HEK293T (cell line): ENCODE measurements at regions of chr1 and their contacts with region 1.

Region 1: GRCh38 chr1:23098463-23099170 is 70.0 kb downstream of the LUZP1 start:
- DNase-seq: peak; percentile 71

Region 2: GRCh38 chr1:23108918-23109533 is 10.4 kb after region 1 on chr1:
- CTCF ChIA-PET with region 1: interaction called, 13 read pairs
- POLR2A ChIA-PET with region 1: no interaction called
- DNase-seq: no peak

Region 3: DNA sequence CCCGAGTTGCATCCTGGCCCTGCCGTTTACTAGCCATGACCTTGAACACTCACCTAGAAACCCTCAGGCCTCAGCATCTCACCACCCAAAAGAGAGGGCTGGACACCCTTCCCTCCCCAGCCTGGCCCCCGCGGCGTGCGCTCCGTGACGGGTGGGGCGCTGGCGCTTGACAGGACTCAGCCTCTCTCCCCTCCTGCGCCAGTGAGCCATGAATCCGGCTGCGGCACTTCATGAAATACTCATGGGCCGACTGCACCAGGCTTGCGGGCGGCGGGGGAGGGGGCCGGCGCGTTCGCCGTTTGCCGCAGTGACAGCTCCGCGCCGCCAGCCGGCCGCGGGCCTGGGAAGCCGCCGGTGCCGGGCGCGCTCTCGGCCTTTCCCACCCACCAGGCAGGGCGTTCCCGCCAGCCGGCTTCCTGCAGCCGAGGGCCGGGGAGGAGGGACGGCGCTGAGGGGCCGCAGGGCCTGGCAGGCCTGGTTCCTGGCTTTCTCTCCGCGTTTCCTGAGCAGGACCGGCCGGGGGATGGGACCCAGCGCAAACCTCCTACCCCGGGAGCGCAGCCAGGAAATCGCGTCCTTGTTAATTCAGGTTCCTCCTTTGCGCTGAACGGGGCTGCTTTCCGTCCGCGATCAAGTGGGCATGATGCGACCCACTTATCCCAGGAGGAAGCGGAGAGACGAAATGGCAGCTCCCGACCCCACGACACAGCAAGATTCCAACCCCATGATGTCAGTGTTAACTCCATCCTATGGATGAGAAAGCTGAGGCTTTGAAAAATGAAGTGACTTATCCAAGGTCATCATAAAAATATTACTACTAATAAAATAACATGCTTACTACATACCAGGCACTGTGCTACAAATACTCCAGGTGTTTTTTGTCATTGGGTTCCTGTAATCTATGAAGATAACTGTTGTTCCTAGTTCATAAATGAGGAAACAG is 79.1 kb after region 1 on chr1:
- CTCF ChIA-PET with region 1: interaction called, 118 read pairs
- POLR2A ChIA-PET with region 1: interaction called, 5 read pairs
- DNase-seq: peak; percentile 74

Region 4: DNA sequence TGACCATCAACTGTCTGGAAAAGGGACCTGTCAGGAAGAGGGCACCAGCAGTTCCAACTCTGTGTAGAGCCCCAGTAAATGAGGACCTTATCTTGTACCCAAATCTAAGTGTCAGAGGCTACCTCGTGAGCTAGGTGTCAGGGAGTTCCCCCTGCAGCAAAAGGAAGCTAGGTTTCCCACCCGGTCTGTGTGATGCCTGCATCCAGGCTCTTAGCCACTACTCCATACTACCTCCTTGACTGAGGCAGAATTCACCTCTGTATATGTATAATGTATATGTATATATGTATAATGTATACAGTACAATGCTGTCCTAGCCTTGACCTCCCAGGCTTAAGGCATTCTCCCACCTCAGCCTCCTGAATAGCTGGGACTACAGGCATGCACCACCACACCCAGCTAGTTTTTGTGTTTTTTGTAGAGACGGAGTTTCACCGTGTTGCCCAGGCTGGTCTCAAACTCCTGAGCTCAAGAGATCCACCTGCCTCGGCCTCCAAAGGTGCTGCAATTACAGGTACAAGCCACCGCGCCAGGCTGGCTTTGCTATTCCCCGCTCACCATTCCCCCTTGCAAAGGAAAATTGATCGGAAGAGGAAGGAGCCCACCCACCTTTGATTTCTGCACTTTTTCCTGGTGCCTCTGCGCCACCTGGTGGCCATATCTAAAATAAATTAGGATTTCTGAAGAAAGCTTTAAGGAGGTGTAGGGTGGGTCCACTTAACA is 85.8 kb after region 1 on chr1:
- CTCF ChIA-PET with region 1: interaction called, 118 read pairs
- POLR2A ChIA-PET with region 1: interaction called, 14 read pairs
- DNase-seq: peak; percentile 62